AG04449 (cell line): ENCODE measurements at regions of chr1 and their contacts with region 1.

Region 1: GRCh38 chr1:168342572-168343280 is 62.0 kb downstream of the TBX19 start:
- DNase-seq: peak; percentile 59
- H3K4me3 ChIP-seq: peak overlapping the region; percentile 29
- CTCF ChIP-seq: peak; percentile 87

Region 2: DNA sequence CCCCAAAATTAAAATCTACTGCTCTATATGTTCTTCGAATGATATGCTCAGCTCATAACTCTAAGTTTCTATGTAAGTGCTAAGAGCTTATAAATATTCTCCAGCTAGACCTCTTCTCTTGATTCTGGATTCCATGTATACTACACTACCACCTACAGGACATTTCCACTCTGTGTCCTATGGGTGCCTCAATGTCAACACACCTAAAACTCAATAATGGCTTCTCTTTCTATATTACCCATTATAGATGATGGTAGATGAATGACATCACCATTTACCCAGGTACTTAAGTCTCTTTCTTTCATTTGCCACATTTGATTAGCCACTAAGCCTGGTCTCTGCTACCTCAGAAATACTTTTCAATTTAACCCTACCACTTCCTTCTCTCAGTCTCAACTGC is 20.8 kb before region 1 on chr1:
- CTCF ChIA-PET with region 1: interaction called, 29 read pairs
- POLR2A ChIA-PET with region 1: no interaction called
- DNase-seq: no peak
- H3K4me3 ChIP-seq: no peak overlapping the region
- CTCF ChIP-seq: peak; percentile 9

Region 3: DNA sequence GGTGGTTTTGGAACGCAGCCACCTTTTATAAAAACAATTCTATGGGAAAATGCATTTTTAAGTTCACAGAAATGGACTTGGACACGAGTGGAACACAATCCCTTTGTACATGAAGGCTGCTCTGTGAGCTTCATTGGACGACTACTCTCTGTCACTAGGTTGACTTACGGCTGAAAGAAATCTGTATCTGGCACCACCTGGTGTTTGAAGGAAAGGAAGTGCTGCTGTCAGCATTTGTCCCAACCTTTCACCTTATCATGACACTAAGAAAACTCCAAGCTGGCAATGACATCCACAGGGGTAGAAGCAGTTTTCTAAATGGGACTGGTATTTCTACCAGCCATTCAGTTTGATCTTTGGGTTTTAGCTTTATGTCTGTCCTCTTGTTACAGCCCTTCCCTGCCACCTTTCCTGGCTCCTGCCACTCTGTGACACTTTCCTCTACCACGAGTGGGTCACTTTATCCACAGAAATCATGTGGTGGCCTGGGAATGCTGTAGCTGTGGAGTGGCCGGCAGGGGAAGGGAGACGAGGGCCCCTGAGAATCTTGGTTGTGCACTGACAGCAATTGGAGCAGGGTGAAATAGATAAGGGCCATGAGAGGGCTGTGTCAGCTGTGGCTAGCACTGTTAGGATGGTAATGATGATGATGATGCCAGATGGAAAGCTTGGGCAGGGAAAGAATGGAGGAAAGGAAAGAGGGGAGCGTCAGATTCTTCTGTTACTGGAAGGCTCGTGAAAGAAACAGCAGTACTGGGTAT is 23.2 kb after region 1 on chr1:
- CTCF ChIA-PET with region 1: interaction called, 20 read pairs
- POLR2A ChIA-PET with region 1: no interaction called
- DNase-seq: no peak
- H3K4me3 ChIP-seq: no peak overlapping the region
- CTCF ChIP-seq: no peak

Region 4: GRCh38 chr1:168476588-168477379 is 134.1 kb after region 1 on chr1:
- CTCF ChIA-PET with region 1: no interaction called
- POLR2A ChIA-PET with region 1: no interaction called
- DNase-seq: no peak
- H3K4me3 ChIP-seq: no peak overlapping the region
- CTCF ChIP-seq: no peak

Region 5: GRCh38 chr1:168572633-168573032 is 229.9 kb after region 1 on chr1:
- CTCF ChIA-PET with region 1: interaction called, 10 read pairs
- POLR2A ChIA-PET with region 1: no interaction called
- DNase-seq: no peak
- H3K4me3 ChIP-seq: no peak overlapping the region
- CTCF ChIP-seq: no peak

Region 6: DNA sequence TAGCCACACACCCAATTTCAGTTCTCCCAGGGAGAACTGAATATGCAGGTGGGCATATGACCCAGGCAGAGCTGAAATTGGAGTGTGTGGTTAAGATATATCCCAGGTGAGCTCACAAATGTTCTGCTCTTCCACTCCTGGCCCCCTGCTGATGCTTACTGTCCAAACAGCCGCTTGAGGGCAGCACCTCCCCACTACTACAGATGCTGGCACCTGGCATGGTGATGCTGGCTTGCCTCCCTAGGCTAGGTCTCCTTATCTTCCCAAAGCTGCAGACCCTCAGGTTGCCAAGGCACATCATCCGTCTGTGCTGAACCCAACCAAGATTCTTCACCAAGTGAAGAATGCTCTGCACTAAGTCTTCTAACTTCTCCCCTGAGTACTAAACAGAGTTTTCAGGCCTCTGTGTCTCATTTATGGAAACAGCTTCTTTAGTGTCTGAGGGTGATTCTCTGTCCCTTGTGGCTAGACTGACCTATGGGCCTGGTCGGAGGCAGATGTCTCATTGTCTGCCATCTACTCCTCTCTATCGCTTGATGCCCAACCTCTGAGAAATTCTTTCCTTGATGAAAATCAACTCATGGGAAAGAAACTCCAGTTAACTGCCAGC is 260.9 kb after region 1 on chr1:
- CTCF ChIA-PET with region 1: interaction called, 12 read pairs
- POLR2A ChIA-PET with region 1: no interaction called
- DNase-seq: no peak
- H3K4me3 ChIP-seq: no peak overlapping the region
- CTCF ChIP-seq: peak; percentile 87